B cell (primary cell): ENCODE measurements at regions of chr6 and their contacts with region 1.

Region 1: GRCh38 chr6:25992413-25993037 is 29.9 kb downstream of the TRIM38 start:
- DNase-seq: peak; percentile 97
- ATAC-seq: peak; percentile 87
- H3K4me3 ChIP-seq: peak overlapping the region; percentile 49 to 80 (median 72)
- H3K4me3 Mint-ChIP-seq: peak overlapping the region; percentile 99
- H3K27ac ChIP-seq: peak overlapping the region; percentile 84 to 94
- H3K27ac Mint-ChIP-seq: peak overlapping the region; percentile 100
- H3K4me1 ChIP-seq: peaks cover 11 to 20% of the 10 kb centered on the region in 2 donors
- H3K4me1 Mint-ChIP-seq: peaks cover 47% of the 10 kb centered on the region
- H3K27me3 ChIP-seq: no peaks in the 10 kb centered on the region
- H3K27me3 Mint-ChIP-seq: no peaks in the 10 kb centered on the region
- CTCF ChIP-seq: peak; percentile 99

Region 2: DNA sequence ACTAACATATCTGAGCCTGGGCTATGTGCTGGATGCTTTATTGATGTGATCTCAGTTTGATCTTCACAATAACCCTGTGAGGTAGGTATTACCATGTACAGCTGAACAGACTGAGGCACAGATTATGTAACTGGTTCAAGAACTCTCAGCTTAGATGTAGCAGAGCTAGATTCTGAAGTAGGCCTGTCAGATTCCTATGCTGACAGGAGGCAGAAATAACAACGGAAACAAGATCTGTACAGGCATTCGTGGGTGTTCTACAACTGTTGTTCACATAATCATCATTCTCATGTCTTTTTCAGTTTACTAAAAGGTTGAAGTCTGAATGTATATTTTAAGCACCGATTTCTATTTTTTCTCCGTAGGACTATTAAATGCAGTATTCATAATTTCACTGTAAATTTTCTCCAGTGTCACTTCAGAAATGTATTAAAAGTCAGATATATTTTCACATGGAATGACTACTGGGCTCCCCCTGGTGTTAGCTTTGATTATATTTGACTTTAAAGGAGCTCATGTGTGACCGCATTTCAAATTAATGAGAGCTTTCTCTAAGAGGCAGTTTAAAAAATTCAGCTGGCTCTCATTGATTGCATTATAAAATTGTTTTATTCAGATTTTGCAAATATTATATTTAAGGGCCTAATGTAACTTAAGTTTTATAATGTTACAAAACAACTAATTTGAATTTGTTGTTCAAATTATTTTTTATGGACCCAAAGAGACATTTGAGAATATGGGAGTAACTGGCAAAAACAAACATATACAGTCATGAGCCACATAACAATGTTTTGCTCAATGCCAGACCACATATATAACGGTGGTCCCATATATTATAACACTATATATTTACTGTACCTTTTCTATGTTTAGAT is 274.4 kb before region 1 on chr6:
- CTCF ChIA-PET with region 1: interaction called, 25 read pairs
- POLR2A ChIA-PET with region 1: no interaction called
- intact Hi-C with region 1: loop called (anchors 2 kb)
- DNase-seq: peak; percentile 51
- ATAC-seq: no peak
- H3K4me3 ChIP-seq: no peak overlapping the region
- H3K4me3 Mint-ChIP-seq: no peak overlapping the region
- H3K27ac ChIP-seq: no peak overlapping the region
- H3K27ac Mint-ChIP-seq: no peak overlapping the region
- H3K4me1 ChIP-seq: no peaks in the 10 kb centered on the region
- H3K4me1 Mint-ChIP-seq: no peaks in the 10 kb centered on the region
- H3K27me3 ChIP-seq: no peaks in the 10 kb centered on the region
- H3K27me3 Mint-ChIP-seq: peaks cover 12% of the 10 kb centered on the region
- CTCF ChIP-seq: peak; percentile 79

Region 3: DNA sequence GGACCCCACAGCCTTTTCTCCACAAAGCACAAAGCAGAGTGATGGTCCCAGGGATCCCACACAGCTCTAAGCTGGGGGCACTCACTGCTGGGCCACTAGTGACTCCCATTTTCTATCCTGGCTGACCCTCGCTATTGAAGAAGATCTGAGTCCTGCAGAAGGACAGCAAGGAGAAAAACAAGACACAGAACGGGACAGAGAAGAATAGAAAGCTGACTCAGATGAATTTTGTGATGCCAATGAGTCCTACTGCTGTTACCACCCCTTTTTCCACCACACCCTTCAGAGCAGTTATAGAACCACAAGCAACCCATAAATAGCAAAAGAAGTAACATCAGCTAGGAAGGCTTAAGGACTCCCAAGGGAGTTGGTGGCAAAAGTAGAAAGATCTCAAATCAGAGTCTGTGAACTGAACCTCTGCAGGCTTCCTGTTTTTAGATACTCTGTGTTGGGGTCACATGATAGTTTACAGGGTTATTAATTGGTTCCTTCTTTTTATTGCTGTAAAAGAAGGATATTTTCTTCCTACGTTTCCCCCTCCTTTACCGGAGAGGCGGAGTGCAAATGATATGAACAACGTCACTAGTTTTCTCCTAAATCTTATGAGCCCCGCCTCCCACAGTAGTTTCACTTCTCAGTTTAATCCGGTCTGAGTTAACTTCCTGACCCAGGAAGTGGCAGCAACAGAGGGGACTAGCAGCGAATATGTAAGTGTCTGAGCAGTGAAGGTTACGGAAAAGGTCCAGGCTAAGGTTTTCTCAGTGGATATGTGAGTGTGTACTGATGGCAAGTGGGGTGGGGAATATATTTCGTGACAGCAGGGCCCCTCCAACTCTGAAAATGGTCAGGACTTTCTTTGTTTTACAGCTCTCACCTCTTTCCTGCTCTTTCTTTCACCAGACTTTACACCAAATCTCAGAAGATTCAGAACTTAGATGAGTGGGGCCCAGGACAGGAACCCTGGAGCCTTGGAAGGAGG is 30.1 kb before region 1 on chr6 and contains the start of gene TRIM38:
- CTCF ChIA-PET with region 1: interaction called, 37 read pairs
- POLR2A ChIA-PET with region 1: interaction called, 33 read pairs
- intact Hi-C with region 1: loop called (anchors 1 kb)
- DNase-seq: peak; percentile 95
- ATAC-seq: peak; percentile 84
- H3K4me3 ChIP-seq: peak within 1 kb of the TSS; percentile 83 to 95 (median 92)
- H3K4me3 Mint-ChIP-seq: peak within 1 kb of the TSS; percentile 97
- H3K27ac ChIP-seq: peak within 1 kb of the TSS; percentile 94 to 97
- H3K27ac Mint-ChIP-seq: peak within 1 kb of the TSS; percentile 98
- H3K4me1 ChIP-seq: peaks cover 74 to 75% of the 10 kb centered on the region in 2 donors
- H3K4me1 Mint-ChIP-seq: peaks cover 78% of the 10 kb centered on the region
- H3K27me3 ChIP-seq: no peaks in the 10 kb centered on the region
- H3K27me3 Mint-ChIP-seq: no peaks in the 10 kb centered on the region
- CTCF ChIP-seq: no peak
- total RNA-seq, gene TRIM38: 57.2 and 57.5 TPM in 2 replicates

Region 4: GRCh38 chr6:26012061-26012460 is 19.5 kb after region 1 on chr6:
- CTCF ChIA-PET with region 1: interaction called, 16 read pairs
- POLR2A ChIA-PET with region 1: interaction called, 3 read pairs
- intact Hi-C with region 1: no loop called
- DNase-seq: no peak
- ATAC-seq: no peak
- H3K4me3 ChIP-seq: no peak overlapping the region
- H3K4me3 Mint-ChIP-seq: no peak overlapping the region
- H3K27ac ChIP-seq: no peak overlapping the region
- H3K27ac Mint-ChIP-seq: no peak overlapping the region
- H3K4me1 ChIP-seq: peaks cover 0 to under 1% of the 10 kb centered on the region in 2 donors
- H3K4me1 Mint-ChIP-seq: peaks cover under 1% of the 10 kb centered on the region
- H3K27me3 ChIP-seq: no peaks in the 10 kb centered on the region
- H3K27me3 Mint-ChIP-seq: no peaks in the 10 kb centered on the region
- CTCF ChIP-seq: no peak

Region 5: GRCh38 chr6:26054857-26055669 is 62.5 kb after region 1 on chr6:
- CTCF ChIA-PET with region 1: no interaction called
- POLR2A ChIA-PET with region 1: no interaction called
- intact Hi-C with region 1: loop called (anchors 2 kb)
- DNase-seq: peak; percentile 93
- ATAC-seq: peak; percentile 65
- H3K4me3 ChIP-seq: peak overlapping the region; percentile 69 to 100 (median 94)
- H3K4me3 Mint-ChIP-seq: peak overlapping the region; percentile 96
- H3K27ac ChIP-seq: peak overlapping the region; percentile 80 to 91
- H3K27ac Mint-ChIP-seq: peak overlapping the region; percentile 97
- H3K4me1 ChIP-seq: peaks cover 12 to 16% of the 10 kb centered on the region in 2 donors
- H3K4me1 Mint-ChIP-seq: peaks cover 15% of the 10 kb centered on the region
- H3K27me3 ChIP-seq: no peaks in the 10 kb centered on the region
- H3K27me3 Mint-ChIP-seq: no peaks in the 10 kb centered on the region
- CTCF ChIP-seq: no peak